ENCODE measurements at regions of chr14 and their contacts with region 1.

Region 1: DNA sequence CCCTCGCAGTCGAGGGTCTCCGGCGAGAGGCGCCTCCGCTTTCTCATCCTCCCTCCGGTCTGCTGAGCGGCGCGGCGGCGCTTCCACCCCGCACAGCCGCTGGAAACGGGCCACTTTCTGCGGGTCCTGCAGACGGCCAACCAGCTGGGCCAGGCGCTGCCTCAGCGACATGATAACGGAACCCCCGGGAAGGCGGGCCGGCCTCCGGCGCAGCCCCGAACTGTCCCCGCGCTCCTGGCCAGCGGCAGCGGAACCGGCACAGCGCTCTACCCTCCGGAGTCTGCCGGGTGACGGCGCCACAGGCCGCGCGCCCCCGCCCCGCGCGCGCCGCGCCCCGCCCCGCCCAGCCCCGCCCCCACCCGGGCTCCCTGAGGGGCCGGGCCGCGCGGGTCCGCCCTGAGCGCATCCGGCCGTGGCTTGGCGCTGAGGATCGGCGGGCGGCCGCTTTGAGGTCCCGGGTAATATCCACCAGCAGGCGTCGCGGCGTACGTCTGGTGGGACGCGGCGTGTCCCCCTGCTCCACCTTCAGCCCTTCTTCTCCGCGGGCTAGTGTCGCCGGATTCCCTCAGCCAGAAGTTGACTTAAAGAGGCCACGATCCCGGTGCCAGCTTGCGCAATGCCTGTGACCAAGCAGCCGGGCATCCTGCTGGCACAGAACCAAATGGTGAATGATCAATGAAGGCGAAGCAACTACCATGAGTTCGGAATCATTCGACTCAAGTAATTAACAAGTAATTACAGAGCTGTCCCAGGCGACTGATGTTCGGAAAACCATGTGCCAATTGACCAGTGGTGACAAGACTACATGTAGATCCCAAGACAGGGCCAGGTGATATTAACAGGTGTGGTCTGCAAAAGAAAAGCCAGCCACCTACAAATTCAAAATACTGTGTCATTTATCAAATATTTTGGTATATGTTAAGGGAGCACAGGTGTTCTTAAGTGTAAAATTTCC is at the start of gene SGPP1:
- DNase-seq: peak; percentile 41 to 79 (median 61)
- H3K4me3 ChIP-seq: peak within 1 kb of the TSS; percentile 70 to 98 (median 91)
- H3K27ac ChIP-seq: peak within 1 kb of the TSS; percentile 63 to 97 (median 90)
- H3K27me3 ChIP-seq: no peaks in the 10 kb centered on the region
- CTCF ChIP-seq: peak in 47 of 56 donors; percentile 13 to 62 (median 41)
- total RNA-seq, gene SGPP1: 16.0 to 26.2 (median 20.9) TPM

Region 2: DNA sequence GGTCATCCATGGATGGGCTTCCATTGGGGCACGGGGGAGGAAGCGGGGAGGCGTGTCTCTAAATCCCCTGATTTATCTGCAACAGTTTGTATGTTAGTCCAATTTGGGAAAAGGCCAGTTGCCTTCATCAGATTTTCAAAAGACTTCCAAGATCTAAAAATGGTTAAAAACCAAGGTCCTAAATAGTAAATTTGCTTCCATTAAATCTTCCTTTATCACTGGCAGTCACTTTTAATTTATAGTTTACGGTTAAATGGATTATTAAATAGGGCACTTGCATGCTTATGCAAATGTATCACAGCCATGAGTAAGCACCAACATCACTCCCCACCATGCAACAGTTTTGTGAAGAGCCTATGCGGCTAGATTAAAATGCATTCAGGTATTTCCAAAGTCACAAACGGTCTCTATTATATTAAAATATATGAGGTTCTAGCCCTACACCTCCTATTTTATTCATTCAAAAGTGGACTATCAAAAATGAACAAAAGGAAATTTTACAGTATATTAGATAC is 301.2 kb before region 1 on chr14:
- intact Hi-C with region 1: no loop called
- DNase-seq: no peak
- H3K4me3 ChIP-seq: no peak overlapping the region
- H3K27ac ChIP-seq: no peak overlapping the region
- H3K27me3 ChIP-seq: no peaks in the 10 kb centered on the region
- CTCF ChIP-seq: no peak

Region 3: GRCh38 chr14:63663430-63664341 is 64.4 kb before region 1 on chr14:
- intact Hi-C with region 1: loop called in 1 of 2 experiments (anchors 5 kb)
- DNase-seq: no peak
- H3K4me3 ChIP-seq: no peak overlapping the region
- H3K27ac ChIP-seq: no peak overlapping the region
- H3K27me3 ChIP-seq: no peaks in the 10 kb centered on the region
- CTCF ChIP-seq: no peak

Measured in dorsolateral prefrontal cortex (tissue), 120 donors.